Posterior cingulate gyrus (tissue), 11 donors: ENCODE measurements at regions of chr15 and their contacts with region 1.

Region 1: DNA sequence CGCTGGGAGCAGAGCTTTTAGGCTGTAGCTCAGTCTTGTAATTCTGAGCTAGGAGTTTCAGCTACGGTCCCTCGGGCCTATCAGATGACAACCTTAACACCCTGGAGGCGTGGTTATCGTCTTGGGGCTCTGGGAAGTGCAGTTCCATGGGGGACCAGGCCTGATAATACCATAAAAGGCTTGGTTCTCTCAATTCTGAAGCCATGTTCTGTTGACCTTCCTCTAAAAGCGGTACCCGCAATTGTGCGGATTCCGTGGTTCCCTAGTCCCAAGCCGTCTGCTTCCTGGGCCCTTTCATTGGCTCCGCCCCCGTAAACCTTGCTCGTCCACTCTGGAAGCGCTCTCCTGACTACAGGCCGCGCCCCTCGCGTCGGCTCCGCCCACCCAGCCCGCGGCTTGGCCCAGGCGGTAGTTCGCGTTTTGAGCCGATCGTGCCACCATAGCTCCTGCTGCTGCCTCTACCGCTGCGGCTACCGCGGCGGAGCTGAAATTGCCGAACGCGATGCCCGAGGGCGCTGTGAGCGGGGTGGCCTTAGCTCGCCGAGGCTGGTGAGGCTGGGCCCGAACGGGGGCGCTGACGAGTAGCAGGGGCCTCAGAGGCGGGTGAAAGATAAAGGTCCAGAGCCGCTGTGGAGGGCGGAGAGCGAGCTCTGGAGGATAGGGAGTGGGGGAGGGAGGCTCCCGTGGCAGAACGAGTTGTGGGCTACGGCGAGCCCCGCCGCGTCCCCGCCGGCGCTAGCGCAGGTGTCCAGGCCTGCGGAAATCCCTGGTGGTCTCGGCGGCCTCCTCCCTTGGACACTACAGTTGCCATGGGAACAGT is at the start of gene MAPKBP1:
- DNase-seq: peak; percentile 94 to 99 (median 96)

Region 2: GRCh38 chr15:41603941-41604911 is 170.0 kb before region 1 on chr15:
- intact Hi-C with region 1: no loop called
- DNase-seq: peak; percentile 35 to 93 (median 66)

Region 3: DNA sequence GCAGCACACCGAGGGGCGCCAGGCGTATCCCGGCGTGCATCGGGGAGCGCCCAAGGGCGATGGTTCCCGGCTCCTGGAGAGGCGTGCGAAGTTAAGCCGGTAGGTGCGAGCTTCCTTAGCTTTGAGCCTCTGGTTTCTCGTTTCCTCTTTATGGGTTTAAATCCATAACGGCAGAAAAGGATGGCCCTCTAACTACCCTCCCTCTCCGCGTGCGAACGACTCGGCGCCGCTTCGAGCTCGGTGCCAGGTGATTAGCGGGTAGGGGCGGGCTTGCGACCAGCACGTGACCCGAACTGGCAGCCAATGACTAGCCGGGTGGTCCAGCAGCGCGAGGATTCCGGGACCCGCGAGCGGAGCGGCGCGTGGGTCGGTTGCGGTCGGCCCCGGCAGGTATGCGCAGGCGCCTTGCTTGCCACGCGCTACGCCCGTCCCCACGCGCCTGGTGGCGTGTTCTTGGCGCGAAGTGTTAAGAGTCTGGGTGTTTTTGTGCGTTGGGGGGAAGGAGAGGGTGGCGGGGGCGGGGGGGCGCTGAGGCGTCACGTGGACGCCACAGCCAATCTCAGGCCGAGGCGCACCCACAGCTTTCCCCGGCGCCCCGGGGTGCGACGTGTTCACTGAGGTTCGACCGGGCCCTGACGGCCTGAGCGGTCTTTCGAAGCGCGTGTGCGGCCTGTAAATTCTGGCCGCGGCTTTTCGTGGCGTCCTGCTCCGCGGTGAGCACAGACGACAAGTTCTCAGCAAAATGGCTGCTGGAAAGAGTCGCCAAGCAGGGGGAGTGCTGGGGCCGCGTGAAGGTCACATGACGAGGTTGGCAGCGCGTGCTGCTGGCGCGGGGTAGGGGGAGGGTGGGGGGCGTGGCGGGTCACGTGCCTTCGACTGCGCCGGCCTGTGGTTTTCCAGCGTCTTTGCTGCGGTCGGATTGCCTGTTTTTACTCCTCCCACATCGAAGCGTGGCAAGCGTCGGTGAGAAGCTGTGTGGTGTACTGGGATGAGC is 152.8 kb before region 1 on chr15:
- intact Hi-C with region 1: loop called (anchors 5 kb)
- DNase-seq: peak; percentile 79 to 97 (median 86)

Region 4: DNA sequence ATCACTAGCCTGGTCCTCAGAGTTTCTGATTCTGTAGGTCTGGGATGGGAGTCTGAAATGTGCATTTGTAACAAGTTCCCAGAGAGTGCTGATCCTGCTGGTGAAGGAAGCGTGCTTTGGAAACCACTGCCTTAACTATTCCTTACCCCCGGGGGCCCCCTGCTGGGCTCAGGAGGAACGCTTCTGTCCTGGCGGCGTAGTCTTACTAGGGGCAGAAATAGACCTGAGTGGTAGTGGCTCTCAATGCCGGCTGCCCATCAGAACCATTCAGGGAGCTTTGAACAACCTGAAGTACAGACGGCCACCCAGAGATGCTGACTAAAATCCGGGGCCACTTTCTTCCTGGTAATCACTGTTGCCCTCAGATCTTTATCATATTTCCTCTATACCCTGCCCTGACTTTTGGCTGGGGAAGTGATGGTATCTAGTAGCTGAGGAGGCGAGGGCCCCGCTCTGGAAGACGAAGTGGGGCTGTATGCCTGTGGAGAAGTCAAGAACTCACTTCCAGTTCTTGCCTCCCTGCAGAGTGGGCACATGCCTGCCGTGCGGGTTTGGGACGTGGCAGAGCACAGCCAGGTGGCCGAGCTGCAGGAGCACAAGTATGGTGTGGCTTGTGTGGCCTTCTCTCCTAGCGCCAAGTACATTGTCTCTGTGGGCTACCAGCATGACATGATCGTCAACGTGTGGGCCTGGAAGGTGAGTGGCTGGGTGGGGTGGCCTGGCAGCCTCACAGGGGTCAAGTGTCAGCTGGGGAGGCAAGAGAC is 37.3 kb after region 1 on chr15:
- intact Hi-C with region 1: loop called (anchors 1 kb)
- DNase-seq: peak; percentile 75 to 98 (median 90)

Region 5: GRCh38 chr15:41827880-41828806 is 53.9 kb after region 1 on chr15 and contains the start of gene JMJD7:
- intact Hi-C with region 1: loop called (anchors 5 kb)
- DNase-seq: peak; percentile 88 to 99 (median 96)

Region 6: DNA sequence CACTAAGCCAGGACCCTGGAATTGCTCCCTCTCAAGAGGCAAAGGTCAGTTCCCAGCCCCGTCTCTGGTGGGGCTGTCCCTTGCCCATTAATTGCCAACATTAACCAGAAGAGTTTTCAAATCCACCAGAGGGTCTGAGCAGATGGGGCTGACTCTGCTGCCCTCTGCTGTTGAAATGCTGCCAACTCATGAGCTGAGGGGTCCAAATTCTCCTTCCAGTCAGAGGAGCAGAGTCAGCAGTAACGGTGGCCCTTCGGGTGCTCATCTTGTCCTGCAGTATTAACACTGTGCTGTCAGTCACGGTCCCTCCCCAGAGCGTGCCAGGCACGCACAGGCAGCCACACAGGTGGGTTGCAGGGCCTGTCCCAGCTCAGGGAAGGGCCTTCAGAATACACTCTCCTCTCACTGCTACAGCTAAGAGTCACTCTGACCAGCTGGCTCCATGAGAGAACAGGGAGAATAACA is 130.3 kb after region 1 on chr15:
- intact Hi-C with region 1: loop called (anchors 5 kb)
- DNase-seq: peak in 8 of 10 donors; percentile 27 to 94 (median 68)